GM23248 (cell line): ENCODE measurements at regions of chr7 and their contacts with region 1.

Region 1: DNA sequence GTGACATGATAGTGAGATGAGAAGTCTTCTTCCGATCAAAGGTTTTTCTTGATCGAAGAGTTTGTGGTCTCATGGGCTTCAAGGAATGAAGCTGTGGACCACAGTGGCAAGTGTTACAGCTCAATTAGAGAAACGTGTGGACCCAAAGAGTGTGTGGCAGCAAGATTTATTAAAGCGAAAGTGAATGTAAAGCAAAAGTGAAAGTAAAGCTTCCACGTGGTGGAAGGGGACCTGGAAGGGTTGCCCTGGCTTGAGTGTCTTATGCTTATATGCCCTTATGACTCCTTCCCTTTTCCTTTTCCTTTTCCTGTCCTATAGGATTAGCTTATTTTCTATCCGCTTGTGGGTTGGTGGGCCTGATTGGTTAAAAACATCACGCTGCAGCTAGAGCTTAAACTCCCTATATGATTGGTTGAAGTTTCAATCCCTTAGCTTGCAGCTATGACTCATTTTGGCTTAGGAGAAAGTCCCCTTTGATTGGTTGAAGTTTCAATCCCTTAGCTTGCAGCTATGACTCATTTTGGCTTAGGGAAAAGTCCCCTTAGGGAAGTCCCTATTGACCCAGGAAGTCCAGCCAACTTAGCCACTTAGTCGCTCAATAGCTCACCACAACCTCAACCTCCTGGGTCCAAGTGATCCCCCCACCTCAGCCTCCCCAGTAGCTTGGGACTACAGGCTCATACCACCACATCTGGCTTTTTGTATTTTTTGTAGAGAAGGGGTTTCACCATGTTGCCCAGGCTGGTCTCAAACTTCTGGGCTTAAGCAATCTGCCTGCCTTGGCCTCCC is 34.7 kb downstream of the MRPS24 start:
- DNase-seq: peak; percentile 25
- H3K4me3 ChIP-seq: no peak overlapping the region
- H3K27ac ChIP-seq: no peak overlapping the region
- H3K4me1 ChIP-seq: no peaks in the 10 kb centered on the region
- H3K27me3 ChIP-seq: no peaks in the 10 kb centered on the region

Region 2: GRCh38 chr7:43535031-43535451 is 299.6 kb before region 1 on chr7:
- in situ Hi-C with region 1: no loop called
- DNase-seq: peak; percentile 58
- H3K4me3 ChIP-seq: no peak overlapping the region
- H3K27ac ChIP-seq: peak overlapping the region; percentile 62
- H3K4me1 ChIP-seq: peaks cover 50% of the 10 kb centered on the region
- H3K27me3 ChIP-seq: no peaks in the 10 kb centered on the region

Region 3: GRCh38 chr7:43582503-43583423 is 251.9 kb before region 1 on chr7 and contains the start of gene STK17A:
- in situ Hi-C with region 1: loop called (anchors 25 kb)
- DNase-seq: peak; percentile 95
- H3K4me3 ChIP-seq: peak within 1 kb of the TSS; percentile 98
- H3K27ac ChIP-seq: peak within 1 kb of the TSS; percentile 91
- H3K4me1 ChIP-seq: peaks cover 32% of the 10 kb centered on the region
- H3K27me3 ChIP-seq: no peaks in the 10 kb centered on the region
- total RNA-seq, gene STK17A: 132 and 137 TPM in 2 replicates

Region 4: DNA sequence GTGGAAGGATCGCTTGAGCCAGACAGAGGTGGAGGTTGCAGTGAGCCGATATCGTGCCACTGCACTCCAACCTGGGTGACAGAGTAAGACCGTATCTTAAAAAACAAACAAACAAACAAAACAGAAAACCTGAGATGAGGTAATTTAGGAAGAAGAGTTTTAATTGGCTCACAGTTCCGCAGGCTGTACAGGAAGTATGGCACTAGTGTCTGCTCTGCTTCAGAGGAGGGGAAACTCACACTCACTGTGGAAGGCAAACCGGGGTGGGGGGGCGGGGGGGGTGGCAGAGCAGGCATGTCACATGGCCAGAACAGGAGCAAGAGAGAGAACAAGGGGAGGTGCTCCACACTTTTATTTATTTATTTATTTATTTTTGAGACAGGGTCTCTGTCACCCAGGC is 96.7 kb after region 1 on chr7:
- in situ Hi-C with region 1: no loop called
- DNase-seq: no peak
- H3K4me3 ChIP-seq: no peak overlapping the region
- H3K27ac ChIP-seq: no peak overlapping the region
- H3K4me1 ChIP-seq: no peaks in the 10 kb centered on the region
- H3K27me3 ChIP-seq: no peaks in the 10 kb centered on the region

Region 5: GRCh38 chr7:44131173-44132029 is 296.7 kb after region 1 on chr7:
- in situ Hi-C with region 1: no loop called
- DNase-seq: peak; percentile 21
- H3K4me3 ChIP-seq: no peak overlapping the region
- H3K27ac ChIP-seq: no peak overlapping the region
- H3K4me1 ChIP-seq: peaks cover 10% of the 10 kb centered on the region; the same call in 1 of the 2 replicates
- H3K27me3 ChIP-seq: no peaks in the 10 kb centered on the region